ENCODE measurements at regions of chr17 and their contacts with region 1.

Region 1: GRCh38 chr17:81553018-81553615 is 964 bp upstream of the FAAP100 start:
- DNase-seq: peak; percentile 70
- ATAC-seq: peak; percentile 50
- H3K4me3 ChIP-seq: peak overlapping the region; percentile 95 to 97 (median 96)
- H3K27ac ChIP-seq: peak overlapping the region; percentile 67
- H3K4me1 ChIP-seq: peaks cover 50% of the 10 kb centered on the region
- H3K27me3 ChIP-seq: no peaks in the 10 kb centered on the region; a peak in 1 of 5 replicates
- CTCF ChIP-seq: peak; percentile 32
- EP300 ChIP-seq: no peak
- POLR2A ChIP-seq: peak; percentile 16 to 68; a peak in 3 of 4 replicates
- RAD21 ChIP-seq: no peak

Region 2: DNA sequence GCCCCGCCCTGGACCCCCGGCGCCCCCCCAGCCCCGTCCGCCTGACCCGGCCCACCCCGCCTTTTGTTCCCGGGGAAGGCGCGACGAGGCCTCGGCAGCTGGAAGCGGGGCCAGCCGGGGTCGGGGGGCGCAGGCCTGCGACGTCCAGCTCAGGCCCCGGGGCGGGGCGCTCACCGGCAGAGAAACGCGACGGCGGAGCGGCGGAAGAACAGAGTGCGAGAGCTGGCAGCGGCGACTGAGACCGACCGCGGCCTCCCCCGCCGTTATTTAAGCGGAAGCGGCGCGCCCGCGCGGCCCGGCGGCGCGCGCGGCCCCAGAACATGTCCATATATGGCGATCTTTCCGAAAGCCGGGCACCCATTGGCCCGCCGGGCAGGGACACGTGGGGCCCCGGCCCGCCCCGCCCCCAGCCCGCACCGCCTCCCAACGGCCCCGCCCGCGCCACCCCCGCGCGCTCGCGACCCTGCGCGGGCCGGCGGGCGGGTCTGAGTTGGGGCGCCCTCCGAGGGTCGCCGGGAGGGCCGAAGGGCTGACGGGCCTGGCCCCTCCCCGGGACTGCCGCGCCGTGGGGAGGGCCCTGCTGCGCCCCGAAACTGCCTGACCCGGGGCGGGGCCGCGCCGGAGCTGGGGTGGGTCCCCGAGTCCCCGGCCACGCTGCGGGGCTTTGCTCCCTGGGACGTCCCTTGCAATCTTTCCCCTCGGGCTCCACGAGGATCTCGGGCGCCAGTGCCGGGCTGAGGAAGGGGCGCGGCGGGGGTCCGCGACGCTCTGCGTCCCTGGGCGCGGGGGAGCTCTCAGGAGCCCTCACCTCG is 40.4 kb before region 1 on chr17 and contains the start of gene ACTG1:
- CTCF ChIA-PET with region 1: no interaction called
- POLR2A ChIA-PET with region 1: interaction called, 27 read pairs
- in situ Hi-C with region 1: no loop called
- intact Hi-C with region 1: no loop called
- DNase-seq: peak; percentile 86
- ATAC-seq: peak; percentile 21
- H3K4me3 ChIP-seq: peak within 1 kb of the TSS; percentile 67 to 90 (median 75)
- H3K27ac ChIP-seq: peak within 1 kb of the TSS; percentile 86
- H3K4me1 ChIP-seq: peaks cover 60% of the 10 kb centered on the region
- H3K27me3 ChIP-seq: no peaks in the 10 kb centered on the region; a peak in 1 of 5 replicates
- CTCF ChIP-seq: no peak
- EP300 ChIP-seq: peak in 1 of 2 experiments; percentile 18; a peak in 1 of 4 replicates
- POLR2A ChIP-seq: peak in 1 of 2 experiments; percentile 99; a peak in 2 of 4 replicates
- RAD21 ChIP-seq: peak; percentile 9; the same call in 1 of the 2 replicates
- total RNA-seq, gene ACTG1: 973 and 1,028 TPM in 2 replicates

Region 3: GRCh38 chr17:81576621-81577277 is 23.6 kb after region 1 on chr17:
- CTCF ChIA-PET with region 1: no interaction called
- POLR2A ChIA-PET with region 1: interaction called, 17 read pairs
- in situ Hi-C with region 1: no loop called
- intact Hi-C with region 1: loop called (anchors 2 kb)
- DNase-seq: peak; percentile 89
- ATAC-seq: peak; percentile 86
- H3K4me3 ChIP-seq: peak overlapping the region in 2 of 3 experiments; percentile 45 to 56; a peak in 5 of 6 replicates
- H3K27ac ChIP-seq: peak overlapping the region; percentile 77
- H3K4me1 ChIP-seq: peaks cover 34% of the 10 kb centered on the region
- H3K27me3 ChIP-seq: no peaks in the 10 kb centered on the region
- CTCF ChIP-seq: 0 out of 2 replicates have a peak, but pooled peaks have one; percentile 16
- EP300 ChIP-seq: peak in 1 of 2 experiments; percentile 73; a peak in 2 of 4 replicates
- POLR2A ChIP-seq: peak in 1 of 2 experiments; percentile 30; a peak in 1 of 4 replicates
- RAD21 ChIP-seq: no peak

Region 4: GRCh38 chr17:81601525-81602120 is 48.5 kb after region 1 on chr17:
- CTCF ChIA-PET with region 1: no interaction called
- POLR2A ChIA-PET with region 1: interaction called, 4 read pairs
- in situ Hi-C with region 1: no loop called
- intact Hi-C with region 1: loop called (anchors 1 kb)
- DNase-seq: peak; percentile 62
- ATAC-seq: peak; percentile 94
- H3K4me3 ChIP-seq: no peak overlapping the region
- H3K27ac ChIP-seq: no peak overlapping the region
- H3K4me1 ChIP-seq: no peaks in the 10 kb centered on the region
- H3K27me3 ChIP-seq: no peaks in the 10 kb centered on the region
- CTCF ChIP-seq: peak; percentile 84
- EP300 ChIP-seq: no peak
- POLR2A ChIP-seq: no peak
- RAD21 ChIP-seq: peak; percentile 54; the same call in 1 of the 2 replicates

Measured in HepG2 (cell line).